ENCODE measurements at regions of chrX and their contacts with region 1.

Region 1: GRCh38 chrX:71400710-71401109 is 34.6 kb downstream of the TAF1 start:
- DNase-seq: no peak
- ATAC-seq: no peak
- H3K4me3 ChIP-seq: no peak overlapping the region
- H3K27ac ChIP-seq: no peak overlapping the region
- H3K4me1 ChIP-seq: no peaks in the 10 kb centered on the region
- H3K27me3 ChIP-seq: no peaks in the 10 kb centered on the region
- CTCF ChIP-seq: no peak
- POLR2A ChIP-seq: no peak

Region 2: DNA sequence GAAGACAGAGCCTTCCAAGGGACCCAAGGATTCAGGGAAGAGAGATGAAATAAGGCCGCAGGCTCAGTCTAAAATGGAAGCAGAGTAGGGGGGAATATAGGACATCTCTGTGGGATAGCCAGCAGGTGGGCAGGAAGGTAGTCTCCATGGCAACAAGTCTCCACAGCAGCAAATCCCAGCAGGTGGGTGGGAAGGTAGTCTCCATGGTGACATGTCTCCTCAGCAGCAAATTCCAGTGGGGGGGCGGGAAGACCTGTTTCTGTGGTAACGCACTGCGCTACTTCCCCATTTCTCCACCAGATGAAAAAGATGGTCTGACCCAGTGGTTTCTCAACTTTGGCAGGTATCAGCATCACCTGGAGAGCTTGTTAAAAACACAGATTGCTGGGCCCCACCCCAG is 237.7 kb before region 1 on chrX:
- intact Hi-C with region 1: no loop called
- DNase-seq: no peak
- ATAC-seq: no peak
- H3K4me3 ChIP-seq: no peak overlapping the region
- H3K27ac ChIP-seq: no peak overlapping the region
- H3K4me1 ChIP-seq: no peaks in the 10 kb centered on the region
- H3K27me3 ChIP-seq: no peaks in the 10 kb centered on the region
- CTCF ChIP-seq: no peak
- POLR2A ChIP-seq: no peak

Region 3: DNA sequence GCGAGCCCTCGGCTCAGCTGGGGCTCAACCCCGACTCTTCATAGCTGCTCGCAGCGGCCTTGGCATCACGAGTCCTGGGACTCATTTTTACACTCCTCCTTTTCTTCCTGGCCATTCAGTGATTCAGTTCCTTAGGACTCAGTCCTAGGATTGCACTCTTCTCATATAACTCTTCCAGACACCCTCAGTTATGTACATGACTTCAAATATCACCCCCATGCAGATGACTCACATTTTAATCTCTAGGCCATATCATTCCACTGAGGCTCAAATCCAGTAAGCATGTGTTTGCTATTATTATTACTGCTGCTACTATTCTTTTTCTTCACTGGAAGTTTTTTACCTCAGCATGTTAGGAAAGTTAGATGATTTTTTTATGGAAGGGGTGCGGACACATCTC is 84.8 kb before region 1 on chrX:
- intact Hi-C with region 1: no loop called
- DNase-seq: no peak
- ATAC-seq: no peak
- H3K4me3 ChIP-seq: no peak overlapping the region
- H3K27ac ChIP-seq: no peak overlapping the region
- H3K4me1 ChIP-seq: no peaks in the 10 kb centered on the region
- H3K27me3 ChIP-seq: no peaks in the 10 kb centered on the region
- CTCF ChIP-seq: no peak
- POLR2A ChIP-seq: no peak

Region 4: GRCh38 chrX:71579136-71579989 is 178.7 kb after region 1 on chrX:
- intact Hi-C with region 1: loop called (anchors 10 kb)
- DNase-seq: no peak
- ATAC-seq: no peak
- H3K4me3 ChIP-seq: no peak overlapping the region
- H3K27ac ChIP-seq: no peak overlapping the region
- H3K4me1 ChIP-seq: no peaks in the 10 kb centered on the region
- H3K27me3 ChIP-seq: no peaks in the 10 kb centered on the region
- CTCF ChIP-seq: no peak
- POLR2A ChIP-seq: no peak

Measured in body of pancreas (tissue), 4 donors.